ENCODE measurements at regions of chr2 and their contacts with region 1.

Region 1: DNA sequence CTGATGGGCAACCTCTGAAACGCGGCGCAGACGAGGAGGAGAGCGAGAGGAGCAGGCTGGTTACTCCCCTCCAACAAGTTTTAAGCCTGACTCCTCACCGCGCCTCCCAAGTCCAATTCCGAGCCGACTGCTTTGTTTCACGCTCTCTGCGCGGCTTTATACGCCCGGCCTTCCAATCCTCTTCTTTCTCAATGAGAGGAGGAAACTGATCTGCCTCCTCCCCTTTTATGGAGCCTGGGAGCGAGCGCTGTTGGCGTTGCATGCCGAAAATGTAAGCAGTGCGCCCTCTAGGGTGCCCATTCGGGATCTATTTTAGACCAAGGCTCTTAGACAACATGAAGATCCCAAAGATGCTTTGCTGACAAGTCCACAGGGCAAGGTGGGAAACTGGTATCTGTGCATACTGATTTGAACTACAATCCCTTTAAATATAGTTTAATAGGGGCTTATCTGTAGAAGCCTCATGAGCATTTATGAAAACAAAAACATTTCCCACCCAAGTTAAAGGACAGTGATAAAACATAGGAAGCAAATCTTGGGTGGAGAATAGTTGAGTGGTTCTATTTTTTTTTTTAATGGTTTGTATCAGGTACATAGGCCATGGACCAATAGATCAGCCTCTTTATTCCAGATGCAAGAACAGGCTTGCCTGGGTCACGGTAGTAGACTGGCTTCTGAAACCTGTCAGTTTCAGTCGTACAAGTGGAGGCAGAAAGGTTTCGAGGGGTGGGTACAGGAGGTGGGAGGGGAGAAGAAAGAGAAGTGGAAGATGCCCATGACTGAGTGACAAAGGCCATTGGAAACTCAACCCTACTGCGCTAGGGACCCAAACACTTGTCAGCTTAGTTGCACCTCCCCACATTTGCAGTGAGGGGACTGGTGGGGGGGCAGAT is at the start of gene RND3:
- DNase-seq: peak; percentile 94 to 97 (median 96)
- ATAC-seq: peak; percentile 78 to 83 (median 80)
- H3K4me3 ChIP-seq: peak within 1 kb of the TSS; percentile 59 to 88 (median 80)
- H3K27ac ChIP-seq: peak within 1 kb of the TSS; percentile 90 to 99 (median 96)
- H3K4me1 ChIP-seq: peaks cover 0 to 27% (median 17%) of the 10 kb centered on the region in 12 donors
- H3K27me3 ChIP-seq: peaks cover 0 to 17% (median 0%) of the 10 kb centered on the region in 9 donors
- CTCF ChIP-seq: peak; percentile 70 to 92 (median 85)
- POLR2A ChIP-seq: peak in 1 of 2 donors; percentile 95
- total RNA-seq, gene RND3: 16.8 to 40.1 (median 30.2) TPM

Region 2: DNA sequence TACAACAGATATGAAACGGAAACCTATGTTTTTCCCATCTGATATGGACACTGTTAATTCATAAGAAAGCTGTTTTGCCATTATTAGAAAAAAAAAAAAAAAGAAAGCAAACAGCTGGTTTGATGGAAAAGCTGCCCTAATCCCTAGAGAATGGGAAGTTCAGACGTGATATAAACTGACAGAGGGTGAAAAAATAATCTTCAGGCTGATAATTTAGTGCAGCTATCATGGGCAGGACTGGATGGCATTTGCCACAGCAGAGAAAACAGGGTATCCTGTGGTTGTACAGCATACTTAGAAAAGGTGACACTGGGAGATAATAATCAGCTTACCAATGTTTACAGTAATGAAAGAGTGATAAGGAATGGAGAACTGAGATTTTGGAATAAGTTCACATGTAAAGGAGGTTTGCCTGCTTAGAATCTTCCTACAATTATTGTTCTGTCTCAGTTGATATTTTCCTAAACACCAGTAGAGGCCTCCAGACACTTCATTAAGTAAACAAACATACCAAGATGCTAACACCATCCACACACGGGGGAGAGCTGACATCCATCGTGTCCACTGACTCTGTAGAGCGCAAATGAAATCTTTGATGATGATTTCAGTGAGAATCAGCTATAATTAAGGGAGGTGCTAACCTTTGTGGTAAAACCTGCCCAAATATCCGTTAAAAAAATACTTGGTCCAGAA is 688.6 kb before region 1 on chr2:
- intact Hi-C with region 1: loop called (anchors 2 to 10 kb)
- DNase-seq: peak in 1 of 5 donors; percentile 24
- ATAC-seq: peak in 3 of 4 donors; percentile 61 to 78 (median 73)
- H3K4me3 ChIP-seq: no peak overlapping the region
- H3K27ac ChIP-seq: no peak overlapping the region
- H3K4me1 ChIP-seq: peaks cover 0 to 7% (median 0%) of the 10 kb centered on the region in 12 donors
- H3K27me3 ChIP-seq: no peaks in the 10 kb centered on the region
- CTCF ChIP-seq: peak in 11 of 12 donors; percentile 11 to 61 (median 49)
- POLR2A ChIP-seq: no peak

Region 3: GRCh38 chr2:150125708-150126107 is 362.1 kb before region 1 on chr2:
- intact Hi-C with region 1: loop called in 1 of 10 experiments (anchors 10 kb)
- DNase-seq: no peak
- ATAC-seq: peak in 2 of 4 donors; percentile 41 to 60
- H3K4me3 ChIP-seq: no peak overlapping the region
- H3K27ac ChIP-seq: no peak overlapping the region
- H3K4me1 ChIP-seq: no peaks in the 10 kb centered on the region
- H3K27me3 ChIP-seq: no peaks in the 10 kb centered on the region
- CTCF ChIP-seq: no peak
- POLR2A ChIP-seq: no peak

Region 4: GRCh38 chr2:150425121-150425955 is 62.4 kb before region 1 on chr2:
- intact Hi-C with region 1: loop called in 9 of 10 experiments (anchors 1 to 10 kb)
- DNase-seq: peak in 4 of 5 donors; percentile 19 to 59 (median 49)
- ATAC-seq: peak; percentile 92 to 98 (median 95)
- H3K4me3 ChIP-seq: peak overlapping the region in 9 of 12 donors; percentile 8 to 54 (median 37)
- H3K27ac ChIP-seq: peak overlapping the region in 10 of 12 donors; percentile 12 to 74 (median 50)
- H3K4me1 ChIP-seq: no peaks in the 10 kb centered on the region
- H3K27me3 ChIP-seq: no peaks in the 10 kb centered on the region
- CTCF ChIP-seq: peak in 11 of 12 donors; percentile 10 to 59 (median 47)
- POLR2A ChIP-seq: no peak

Region 5: GRCh38 chr2:150787353-150788093 is 299.7 kb after region 1 on chr2:
- intact Hi-C with region 1: loop called in 1 of 10 experiments (anchors 10 kb)
- DNase-seq: no peak
- ATAC-seq: peak in 3 of 4 donors; percentile 34 to 56 (median 38)
- H3K4me3 ChIP-seq: no peak overlapping the region
- H3K27ac ChIP-seq: peak overlapping the region in 7 of 12 donors; percentile 4 to 51 (median 22)
- H3K4me1 ChIP-seq: peaks cover 0 to 34% (median 10%) of the 10 kb centered on the region in 12 donors
- H3K27me3 ChIP-seq: no peaks in the 10 kb centered on the region
- CTCF ChIP-seq: no peak
- POLR2A ChIP-seq: no peak

Measured in heart left ventricle (tissue), 16 donors.